ENCODE measurements at regions of chr16 and their contacts with region 1.

Region 1: DNA sequence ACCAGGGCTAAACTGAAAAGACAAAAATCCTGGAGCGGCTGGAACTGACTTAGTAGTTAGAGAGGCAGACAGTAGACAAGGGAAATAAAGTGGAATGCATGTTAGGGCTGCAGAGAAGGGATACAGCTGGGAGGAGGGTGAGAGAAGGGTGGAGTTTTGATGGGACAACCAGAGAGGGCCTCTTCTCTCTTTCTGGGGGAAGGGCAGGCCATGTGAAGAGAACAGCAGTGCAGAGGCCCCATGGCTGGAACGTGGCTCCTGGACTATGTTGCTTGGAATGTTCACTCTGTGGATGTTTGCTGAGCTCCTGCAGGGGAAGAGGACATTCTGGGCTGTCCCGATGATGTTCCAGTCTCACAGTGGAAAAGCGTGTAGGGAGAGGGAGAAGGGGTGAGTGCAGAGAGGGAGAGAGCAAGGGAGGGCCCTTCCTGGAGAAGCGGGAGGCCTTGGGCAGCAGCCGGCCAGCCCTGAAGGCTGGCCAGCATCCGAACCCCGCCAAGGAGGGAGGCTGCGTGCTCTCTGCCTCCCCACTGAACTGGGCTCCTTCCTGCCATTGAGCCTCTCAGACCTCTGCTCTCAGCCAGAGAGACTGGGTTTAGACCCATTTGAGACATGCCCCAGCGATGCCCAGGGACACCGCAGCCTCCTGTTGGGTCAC is 33.1 kb upstream of the GSE1 start:
- DNase-seq: no peak
- H3K4me3 ChIP-seq: no peak overlapping the region
- H3K27me3 ChIP-seq: no peaks in the 10 kb centered on the region
- CTCF ChIP-seq: no peak

Region 2: DNA sequence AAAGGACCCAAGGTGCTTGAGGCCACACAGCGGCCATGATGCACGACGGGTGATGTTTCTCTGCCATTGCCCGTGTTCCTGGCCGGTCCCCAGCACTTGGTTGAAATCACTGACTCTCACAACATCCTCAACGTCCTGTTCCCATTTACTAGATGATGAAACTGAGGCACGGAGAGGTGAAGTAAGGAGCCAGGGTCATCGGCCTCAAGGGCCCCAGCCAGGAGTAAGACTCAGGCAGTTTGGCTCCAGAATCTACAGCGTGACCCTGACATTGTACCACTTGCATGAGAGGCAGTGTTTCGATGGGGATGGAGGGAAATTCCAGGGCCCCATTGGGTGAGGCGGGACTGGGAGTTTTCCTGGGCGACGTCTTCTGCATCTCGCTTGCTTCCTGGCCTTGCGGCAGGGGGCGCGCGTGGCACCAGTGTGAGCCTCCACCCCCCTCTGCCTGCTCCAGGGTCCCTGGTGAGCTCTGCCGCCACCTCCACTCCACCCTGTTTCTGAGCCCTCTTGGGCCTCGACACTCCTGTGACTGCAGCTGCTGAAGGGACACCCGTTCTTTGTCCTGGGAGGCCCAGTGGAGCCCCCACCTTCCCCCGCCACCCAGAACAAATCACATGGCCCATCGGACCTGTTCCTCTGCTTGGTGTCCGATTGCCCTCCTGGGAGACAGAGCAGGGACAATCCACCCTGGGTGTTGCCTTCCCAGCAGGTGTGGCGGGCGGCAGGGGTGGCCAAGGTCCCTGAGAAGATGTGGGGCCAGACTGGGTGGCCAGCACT is 99.9 kb before region 1 on chr16:
- CTCF ChIA-PET with region 1: no interaction called
- POLR2A ChIA-PET with region 1: no interaction called
- DNase-seq: no peak
- H3K4me3 ChIP-seq: no peak overlapping the region
- H3K27me3 ChIP-seq: no peaks in the 10 kb centered on the region
- CTCF ChIP-seq: 0 out of 2 replicates have a peak, but pooled peaks have one; percentile 17

Region 3: DNA sequence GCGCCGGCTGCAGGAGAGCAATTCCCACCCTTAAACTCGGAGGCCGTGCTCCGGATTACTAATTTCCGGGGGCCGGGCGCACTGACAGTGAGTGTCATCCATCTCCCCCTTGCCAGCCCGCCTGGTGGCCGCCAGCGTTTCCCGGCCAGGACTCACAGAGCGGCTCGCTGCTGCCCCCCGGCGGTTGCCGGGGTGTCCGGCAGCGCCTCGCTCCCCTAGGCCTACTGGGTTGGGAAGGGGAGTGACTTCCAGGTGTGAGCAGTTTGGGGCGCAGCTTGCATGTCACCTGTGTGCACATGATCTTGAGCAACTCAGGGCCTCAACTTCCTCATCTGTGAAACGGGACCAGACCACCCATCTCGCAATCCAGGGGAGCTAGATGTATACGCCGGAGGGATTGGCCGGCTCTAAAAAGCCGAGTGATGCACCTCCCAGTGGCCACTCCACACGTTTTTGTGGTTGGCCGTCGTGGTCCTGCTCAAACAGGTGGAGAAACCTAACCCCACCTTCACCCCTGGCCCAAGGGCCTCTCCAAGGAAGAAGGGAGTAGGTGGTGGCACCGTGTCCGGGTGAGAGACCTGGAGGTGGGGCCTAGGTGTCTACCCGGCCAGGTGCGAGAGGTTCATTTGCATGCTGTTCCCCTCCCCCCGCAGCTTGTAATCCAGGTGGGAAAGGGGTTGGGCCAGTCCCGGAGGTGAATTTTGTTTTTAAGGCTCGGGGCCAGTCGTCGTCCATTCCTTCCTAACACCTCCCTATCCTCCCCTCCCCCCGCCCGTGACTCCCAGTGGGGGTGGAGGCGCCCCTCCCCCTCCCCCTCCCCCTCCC is 30.7 kb after region 1 on chr16:
- CTCF ChIA-PET with region 1: interaction called, 11 read pairs
- POLR2A ChIA-PET with region 1: no interaction called
- DNase-seq: peak; percentile 19
- H3K4me3 ChIP-seq: peak overlapping the region; percentile 56
- H3K27me3 ChIP-seq: no peaks in the 10 kb centered on the region
- CTCF ChIP-seq: peak; percentile 98